ENCODE measurements at regions of chr19 and their contacts with region 1.

Region 1: GRCh38 chr19:12139885-12140547 is at the start of gene ZNF20:
- DNase-seq: peak; percentile 92 to 98
- H3K4me3 ChIP-seq: peak within 1 kb of the TSS; percentile 68 to 94 (median 90)
- H3K27ac ChIP-seq: peak within 1 kb of the TSS; percentile 95
- H3K4me1 ChIP-seq: peaks cover 2 to 10% (median 6%) of the 10 kb centered on the region in 4 experiments; a peak in 6 of 7 replicates
- H3K27me3 ChIP-seq: no peaks in the 10 kb centered on the region
- CTCF ChIP-seq: no peak
- EP300 ChIP-seq: no peak
- POLR2A ChIP-seq: peak; percentile 61 to 89
- RAD21 ChIP-seq: 0 out of 4 replicates have a peak, but pooled peaks of 1 of the 2 experiments have one; percentile 0
- total RNA-seq, gene ZNF20: 7.4 and 9.0 TPM in 2 replicates

Region 2: GRCh38 chr19:11964858-11965645 is 175.0 kb before region 1 on chr19 and contains the start of gene ZNF763:
- CTCF ChIA-PET with region 1: interaction called, 16 read pairs
- POLR2A ChIA-PET with region 1: interaction called, 25 read pairs
- DNase-seq: peak; percentile 89 to 96
- H3K4me3 ChIP-seq: peak within 1 kb of the TSS; percentile 66 to 76 (median 72)
- H3K27ac ChIP-seq: peak within 1 kb of the TSS; percentile 75; the same call in 1 of the 2 replicates
- H3K4me1 ChIP-seq: peaks cover 0 to 7% (median 4%) of the 10 kb centered on the region in 4 experiments; a peak in 5 of 7 replicates
- H3K27me3 ChIP-seq: peaks cover 0 to 13% (median 7%) of the 10 kb centered on the region in 4 experiments; a peak in 5 of 7 replicates
- CTCF ChIP-seq: no peak
- EP300 ChIP-seq: no peak
- POLR2A ChIP-seq: peak; percentile 71 to 91
- RAD21 ChIP-seq: no peak; a peak in 2 of 4 replicates
- total RNA-seq, gene ZNF763: 1.7 TPM in 2 replicates

Region 3: DNA sequence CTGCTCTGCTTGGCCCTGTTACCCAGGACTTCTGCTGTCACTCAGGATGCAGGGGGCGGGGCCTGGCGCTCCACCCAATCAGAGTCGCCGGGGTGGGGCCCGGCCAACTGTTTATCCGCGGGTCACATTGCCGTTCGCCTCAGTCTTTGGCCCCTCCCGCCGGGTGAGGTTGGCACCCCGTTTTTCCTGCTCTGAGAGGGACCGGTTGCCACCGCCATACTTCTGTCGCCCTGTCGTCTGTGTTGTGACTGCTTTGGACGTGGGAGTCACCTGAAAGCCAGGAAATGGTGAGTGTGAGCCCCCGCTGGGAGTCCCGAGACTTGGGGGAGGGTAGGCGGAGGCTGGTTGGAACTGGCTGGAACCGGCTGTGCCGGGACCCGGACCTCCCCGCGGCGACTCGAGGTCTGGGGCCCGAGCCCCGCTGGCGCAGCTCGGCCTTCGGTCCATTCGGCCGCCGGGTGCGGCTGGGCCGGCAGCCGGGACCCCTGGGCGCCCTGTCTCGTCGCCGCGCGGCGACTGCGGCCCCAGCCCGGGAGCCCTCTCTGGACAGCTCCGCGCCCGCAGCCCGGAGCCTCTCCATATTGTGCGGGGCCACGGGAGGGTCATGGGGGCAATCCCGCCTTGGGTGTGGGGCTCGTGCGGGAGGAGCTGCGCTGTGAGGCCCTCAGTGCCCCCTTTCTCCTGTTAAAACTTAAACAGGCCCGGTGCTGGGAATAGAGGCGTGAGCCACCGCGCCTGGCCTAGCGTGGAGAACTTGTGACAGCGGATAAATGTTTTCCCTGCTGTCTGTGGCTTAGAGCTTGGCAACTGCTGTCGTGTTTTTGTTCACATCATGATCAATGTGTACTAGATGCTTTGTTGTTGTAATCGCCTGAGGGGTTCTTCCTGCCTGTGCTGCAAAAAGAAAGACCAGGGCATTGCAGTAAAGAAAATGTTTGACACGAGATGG is 75.2 kb before region 1 on chr19 and contains the start of gene ZNF844:
- CTCF ChIA-PET with region 1: interaction called, 40 read pairs
- POLR2A ChIA-PET with region 1: interaction called, 19 read pairs
- DNase-seq: peak; percentile 75 to 99
- H3K4me3 ChIP-seq: peak within 1 kb of the TSS; percentile 62 to 82 (median 73)
- H3K27ac ChIP-seq: peak within 1 kb of the TSS; percentile 94
- H3K4me1 ChIP-seq: peaks cover 2 to 8% (median 4%) of the 10 kb centered on the region in 4 experiments; a peak in 6 of 7 replicates
- H3K27me3 ChIP-seq: no peaks in the 10 kb centered on the region
- CTCF ChIP-seq: no peak
- EP300 ChIP-seq: peak; percentile 15 to 31; a peak in 2 of 3 replicates
- POLR2A ChIP-seq: peak; percentile 87 to 99
- RAD21 ChIP-seq: no peak
- total RNA-seq, gene ZNF844: 9.4 and 9.8 TPM in 2 replicates

Region 4: DNA sequence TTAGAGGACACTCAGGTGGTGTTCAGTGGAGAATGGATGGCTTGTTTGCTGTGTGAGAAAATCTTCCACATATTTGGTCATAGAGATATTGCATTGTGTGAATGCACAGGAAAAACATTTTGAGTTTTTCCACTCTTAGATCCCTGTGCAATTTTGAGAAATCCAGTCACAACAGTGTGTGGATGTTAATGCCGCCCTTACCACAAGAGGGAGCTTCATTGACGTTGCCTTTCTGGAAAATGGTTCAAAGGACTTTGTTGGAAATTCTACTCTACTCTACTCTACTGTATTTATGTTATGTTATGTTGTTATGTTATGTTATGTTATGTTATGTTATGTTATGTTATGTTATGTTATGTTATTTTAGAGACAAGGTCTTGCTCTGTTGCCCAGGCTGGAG is 13.3 kb before region 1 on chr19:
- CTCF ChIA-PET with region 1: interaction called, 20 read pairs
- POLR2A ChIA-PET with region 1: interaction called, 25 read pairs
- DNase-seq: peak in 1 of 2 experiments; percentile 54
- H3K4me3 ChIP-seq: no peak overlapping the region
- H3K27ac ChIP-seq: no peak overlapping the region
- H3K4me1 ChIP-seq: no peaks in the 10 kb centered on the region
- H3K27me3 ChIP-seq: no peaks in the 10 kb centered on the region
- CTCF ChIP-seq: peak in 2 of 3 experiments; percentile 45 to 68; a peak in 2 of 4 replicates
- EP300 ChIP-seq: no peak
- POLR2A ChIP-seq: no peak
- RAD21 ChIP-seq: peak; percentile 19 to 39

Region 5: GRCh38 chr19:12162513-12162881 is 22.5 kb after region 1 on chr19:
- CTCF ChIA-PET with region 1: interaction called, 3 read pairs
- POLR2A ChIA-PET with region 1: interaction called, 11 read pairs
- DNase-seq: no peak
- H3K4me3 ChIP-seq: peak overlapping the region; percentile 87 to 97 (median 94); a peak in 6 of 8 replicates
- H3K27ac ChIP-seq: no peak overlapping the region
- H3K4me1 ChIP-seq: peaks cover 0 to 3% (median 1%) of the 10 kb centered on the region in 4 experiments; a peak in 2 of 7 replicates
- H3K27me3 ChIP-seq: no peaks in the 10 kb centered on the region
- CTCF ChIP-seq: no peak
- EP300 ChIP-seq: no peak
- POLR2A ChIP-seq: no peak
- RAD21 ChIP-seq: no peak

Region 6: GRCh38 chr19:12244370-12244769 is 104.4 kb after region 1 on chr19:
- CTCF ChIA-PET with region 1: no interaction called
- POLR2A ChIA-PET with region 1: no interaction called
- DNase-seq: no peak
- H3K4me3 ChIP-seq: no peak overlapping the region
- H3K27ac ChIP-seq: no peak overlapping the region
- H3K4me1 ChIP-seq: no peaks in the 10 kb centered on the region
- H3K27me3 ChIP-seq: no peaks in the 10 kb centered on the region; a peak in 1 of 7 replicates
- CTCF ChIP-seq: peak in 1 of 3 experiments; percentile 26; a peak in 1 of 4 replicates
- EP300 ChIP-seq: no peak
- POLR2A ChIP-seq: no peak
- RAD21 ChIP-seq: peak; percentile 54

Measured in H1 (cell line).